ENCODE measurements at regions of chr19 and their contacts with region 1.

Region 1: DNA sequence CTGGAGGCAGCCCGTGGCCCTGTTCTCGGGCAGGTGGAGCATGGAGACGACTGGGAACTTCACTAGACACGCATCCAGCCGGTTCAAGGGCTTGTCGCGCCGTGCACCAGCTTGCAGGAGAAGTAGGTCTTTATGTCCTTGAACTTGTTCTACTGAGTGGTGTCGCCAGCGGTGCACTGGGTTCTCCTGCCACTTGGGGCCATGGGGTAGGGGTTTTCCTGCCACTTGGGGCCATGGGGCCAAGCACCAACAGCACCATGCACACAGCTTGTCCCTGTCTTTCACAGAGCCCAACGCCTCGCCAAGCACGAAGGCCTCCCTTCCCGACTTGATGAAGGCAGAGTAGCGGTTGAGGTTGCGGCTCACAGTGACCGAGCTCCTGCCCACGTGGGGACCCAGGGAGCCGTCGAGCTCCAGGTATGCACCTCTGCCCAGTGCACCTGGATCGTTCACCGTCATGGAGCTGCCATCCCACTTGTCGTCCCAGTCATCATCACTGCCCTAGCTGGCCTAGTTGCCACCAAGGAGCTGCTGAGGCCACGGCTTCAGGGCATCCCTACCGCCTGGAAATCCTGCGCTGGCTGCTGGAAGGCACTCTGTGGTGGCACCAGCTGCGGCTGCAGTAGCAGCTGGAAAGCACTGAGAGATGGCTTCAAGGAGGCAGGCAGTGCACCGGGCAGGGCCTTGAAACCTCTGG is 40.5 kb upstream of the TPM4 start:
- DNase-seq: peak; percentile 68

Region 2: GRCh38 chr19:15812060-15812682 is 223.6 kb before region 1 on chr19:
- intact Hi-C with region 1: no loop called
- DNase-seq: no peak

Region 3: DNA sequence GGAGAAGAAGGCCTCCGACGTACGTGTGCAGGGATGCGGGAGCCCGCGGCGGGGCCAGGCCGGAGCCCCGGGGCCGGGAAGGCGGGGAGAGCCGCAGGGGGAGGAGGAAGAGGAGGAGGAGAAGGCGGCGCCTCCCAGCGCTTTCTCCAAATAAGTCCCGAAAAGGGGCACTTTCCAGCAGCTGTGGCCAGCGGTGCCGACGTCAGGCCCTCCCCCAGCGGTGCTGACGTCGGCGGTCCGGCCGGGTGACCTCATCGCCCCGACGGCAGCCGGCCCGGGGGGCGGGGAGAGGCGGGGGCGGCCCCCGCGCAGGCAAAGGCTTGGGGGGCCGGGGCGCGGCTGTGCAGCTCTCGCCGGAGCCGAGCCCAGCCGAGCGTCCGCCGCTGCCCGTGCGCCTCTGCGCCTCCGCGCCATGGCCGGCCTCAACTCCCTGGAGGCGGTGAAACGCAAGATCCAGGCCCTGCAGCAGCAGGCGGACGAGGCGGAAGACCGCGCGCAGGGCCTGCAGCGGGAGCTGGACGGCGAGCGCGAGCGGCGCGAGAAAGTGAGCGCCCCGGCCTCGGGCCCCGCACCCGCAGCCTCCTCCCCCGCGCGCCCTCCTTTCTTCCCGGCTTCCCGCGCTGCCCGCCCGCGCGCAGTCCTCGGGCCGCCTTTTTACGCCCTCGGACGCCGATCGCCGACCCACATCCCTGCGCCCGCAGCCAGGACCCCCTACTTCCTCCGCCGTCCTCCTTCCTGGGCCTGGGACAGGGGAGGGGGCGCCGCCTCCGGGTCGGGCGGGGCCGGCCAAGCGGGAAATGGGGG is 40.6 kb after region 1 on chr19 and contains the start of gene TPM4:
- intact Hi-C with region 1: loop called in 1 of 2 experiments (anchors 1 kb)
- DNase-seq: peak; percentile 98
- total RNA-seq, gene TPM4: 1,050 to 1,475 TPM

Region 4: GRCh38 chr19:16111160-16111908 is 75.6 kb after region 1 on chr19 and contains the start of gene RAB8A:
- intact Hi-C with region 1: loop called in 1 of 2 experiments (anchors 5 kb)
- DNase-seq: peak; percentile 100
- total RNA-seq, gene RAB8A: 53.5 to 58.3 TPM

Measured in posterior vena cava (tissue), 2 donors.